Posterior cingulate gyrus (tissue), 11 donors: ENCODE measurements at regions of chr4 and their contacts with region 1.

Region 1: GRCh38 chr4:47990145-47990544 is 26.3 kb downstream of the CNGA1 start:
- DNase-seq: no peak

Region 2: GRCh38 chr4:48047421-48047844 is 57.3 kb after region 1 on chr4:
- intact Hi-C with region 1: loop called (anchors 10 kb)
- DNase-seq: no peak